PC-3 (cell line): ENCODE measurements at regions of chr7 and their contacts with region 1.

Region 1: DNA sequence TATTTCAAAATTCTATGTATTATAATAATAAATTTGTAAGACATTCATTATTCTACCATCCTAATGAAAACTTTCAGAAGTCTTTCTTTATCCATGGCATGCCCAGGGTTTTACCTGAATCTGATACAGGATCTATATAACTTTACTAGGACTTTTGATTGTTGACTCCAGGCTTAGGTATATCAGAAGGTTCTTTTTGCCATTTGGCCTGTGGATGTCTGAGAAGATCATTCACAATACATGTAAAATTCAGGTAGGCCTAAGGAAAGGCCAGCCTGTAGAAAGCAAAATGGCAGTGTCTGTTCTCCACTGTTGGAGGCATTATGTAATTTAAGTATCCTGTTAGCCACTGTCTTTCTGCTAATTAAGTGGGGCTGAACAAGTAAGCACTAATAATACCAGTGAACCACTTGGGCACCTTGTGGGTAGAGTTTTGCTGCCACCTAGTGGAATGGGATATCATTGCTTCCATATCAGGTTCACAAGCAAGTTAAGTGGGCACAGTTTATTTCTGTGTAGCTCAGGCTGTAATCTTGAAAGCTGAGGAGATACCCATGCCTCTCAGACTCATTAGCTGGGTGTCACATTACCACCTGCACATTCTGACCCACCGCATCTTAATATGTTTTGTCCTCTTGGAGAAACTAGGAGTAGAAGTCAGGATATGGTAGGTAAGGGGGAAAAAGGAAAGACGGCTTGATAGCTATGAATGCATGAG is 105.5 kb downstream of the SEPTIN7 start:
- DNase-seq: peak; percentile 81
- ATAC-seq: peak; percentile 91
- H3K4me3 ChIP-seq: no peak overlapping the region
- H3K27ac ChIP-seq: no peak overlapping the region
- H3K4me1 ChIP-seq: no peaks in the 10 kb centered on the region
- H3K27me3 ChIP-seq: no peaks in the 10 kb centered on the region
- CTCF ChIP-seq: peak; percentile 88

Region 2: GRCh38 chr7:35630024-35630972 is 276.1 kb before region 1 on chr7:
- CTCF ChIA-PET with region 1: no interaction called
- POLR2A ChIA-PET with region 1: no interaction called
- intact Hi-C with region 1: loop called (anchors 5 kb)
- DNase-seq: peak; percentile 40
- ATAC-seq: peak; percentile 76
- H3K4me3 ChIP-seq: no peak overlapping the region
- H3K27ac ChIP-seq: no peak overlapping the region
- H3K4me1 ChIP-seq: no peaks in the 10 kb centered on the region
- H3K27me3 ChIP-seq: no peaks in the 10 kb centered on the region
- CTCF ChIP-seq: no peak

Region 3: DNA sequence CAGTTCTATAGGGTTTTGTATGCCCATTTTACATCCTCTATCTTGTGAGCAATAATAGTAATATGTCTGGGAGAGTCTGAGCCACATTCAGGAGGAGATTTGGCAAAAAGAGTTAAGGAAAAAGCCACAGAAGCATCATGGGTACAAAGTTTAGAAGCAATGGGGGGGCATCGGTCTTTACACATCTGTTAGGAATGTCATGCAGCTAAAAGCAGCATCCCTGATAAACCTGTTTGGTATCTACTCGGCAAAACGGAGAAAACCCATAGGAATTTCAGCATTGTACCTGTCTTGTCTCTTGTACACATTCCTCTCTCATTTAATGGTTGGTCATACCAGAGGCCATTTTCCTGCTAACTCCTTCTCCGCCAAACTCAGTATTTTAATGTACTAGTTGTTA is 198.9 kb before region 1 on chr7:
- CTCF ChIA-PET with region 1: interaction called, 8 read pairs
- POLR2A ChIA-PET with region 1: no interaction called
- intact Hi-C with region 1: loop called (anchors 1 kb)
- DNase-seq: peak; percentile 69
- ATAC-seq: peak; percentile 28
- H3K4me3 ChIP-seq: no peak overlapping the region
- H3K27ac ChIP-seq: no peak overlapping the region
- H3K4me1 ChIP-seq: peaks cover 9% of the 10 kb centered on the region
- H3K27me3 ChIP-seq: no peaks in the 10 kb centered on the region
- CTCF ChIP-seq: no peak

Region 4: DNA sequence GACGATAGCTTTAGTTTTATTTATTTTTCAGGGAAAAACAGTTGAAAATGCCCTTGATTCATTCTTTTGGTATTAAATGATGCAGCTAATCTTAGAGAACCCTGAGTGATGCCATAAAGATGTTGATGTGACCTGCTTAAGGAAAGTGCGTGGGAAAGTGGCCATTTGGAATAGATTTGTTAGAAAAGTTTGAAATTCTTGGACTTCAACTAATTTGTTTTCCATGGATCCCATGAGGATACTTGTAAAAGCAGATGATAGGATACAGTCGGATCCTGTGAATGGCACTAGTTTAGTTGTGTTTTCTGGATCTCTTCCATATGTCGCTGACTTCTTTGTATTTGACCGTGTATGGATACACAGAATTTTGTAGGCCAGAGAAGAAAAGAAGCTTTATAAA is 36.5 kb before region 1 on chr7:
- CTCF ChIA-PET with region 1: no interaction called
- POLR2A ChIA-PET with region 1: no interaction called
- intact Hi-C with region 1: no loop called
- DNase-seq: no peak
- ATAC-seq: no peak
- H3K4me3 ChIP-seq: no peak overlapping the region
- H3K27ac ChIP-seq: no peak overlapping the region
- H3K4me1 ChIP-seq: no peaks in the 10 kb centered on the region
- H3K27me3 ChIP-seq: no peaks in the 10 kb centered on the region
- CTCF ChIP-seq: no peak